AG04450 (cell line): ENCODE measurements at regions of chr5 and their contacts with region 1.

Region 1: GRCh38 chr5:135565725-135566421 is 12.9 kb downstream of the CXCL14 start:
- DNase-seq: no peak
- H3K4me3 ChIP-seq: no peak overlapping the region
- H3K27ac ChIP-seq: no peak overlapping the region
- H3K27me3 ChIP-seq: peaks cover 12% of the 10 kb centered on the region
- CTCF ChIP-seq: peak; percentile 95

Region 2: DNA sequence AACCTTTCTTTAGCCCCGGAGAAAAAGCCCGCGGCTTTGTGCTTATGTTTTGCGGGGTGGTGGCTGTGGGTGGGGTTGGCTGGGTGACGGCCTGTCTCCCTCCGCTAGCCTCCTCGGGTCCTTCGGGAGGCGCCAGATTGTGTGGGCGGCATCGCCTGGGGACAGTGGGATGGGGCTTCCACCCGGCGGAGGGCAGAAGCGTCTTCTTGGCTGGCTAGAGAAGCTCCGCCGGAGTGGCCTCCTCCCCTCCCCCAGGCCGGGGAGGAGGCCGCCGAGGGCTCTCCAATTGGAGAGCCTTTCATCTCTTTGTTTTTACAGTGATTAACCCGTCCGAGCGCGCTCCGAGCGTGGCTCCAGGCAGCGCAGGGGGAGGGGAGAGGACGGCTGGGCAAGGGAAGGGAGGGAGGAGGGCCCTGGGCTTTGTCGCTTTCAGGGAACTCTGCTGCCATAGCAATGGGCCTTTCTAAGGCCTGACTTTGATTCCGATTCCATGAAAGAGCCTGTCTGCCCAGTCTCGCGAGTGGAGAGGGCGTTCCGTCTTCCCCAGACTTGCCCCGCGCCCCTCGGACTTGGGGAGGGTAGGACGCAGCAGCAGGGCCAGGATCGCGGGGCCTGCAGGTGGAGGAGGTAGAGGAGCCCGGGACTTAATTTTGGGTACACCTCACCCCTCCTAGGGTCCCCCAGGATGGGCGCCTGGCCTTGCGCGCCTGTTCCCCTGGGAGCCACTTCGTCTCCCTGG is 77.0 kb before region 1 on chr5:
- CTCF ChIA-PET with region 1: interaction called, 11 read pairs
- POLR2A ChIA-PET with region 1: interaction called, 4 read pairs
- DNase-seq: peak; percentile 45
- H3K4me3 ChIP-seq: peak overlapping the region; percentile 61
- H3K27ac ChIP-seq: peak overlapping the region; percentile 11
- H3K27me3 ChIP-seq: peaks cover 18% of the 10 kb centered on the region
- CTCF ChIP-seq: no peak

Region 3: GRCh38 chr5:135543485-135544304 is 22.2 kb before region 1 on chr5:
- CTCF ChIA-PET with region 1: interaction called, 182 read pairs
- POLR2A ChIA-PET with region 1: no interaction called
- DNase-seq: no peak
- H3K4me3 ChIP-seq: peak overlapping the region; percentile 18
- H3K27ac ChIP-seq: no peak overlapping the region
- H3K27me3 ChIP-seq: peaks cover 92% of the 10 kb centered on the region
- CTCF ChIP-seq: no peak

Region 4: GRCh38 chr5:135578685-135579341 is 12.9 kb after region 1 on chr5 and contains the start of gene CXCL14:
- CTCF ChIA-PET with region 1: interaction called, 14 read pairs
- POLR2A ChIA-PET with region 1: no interaction called
- DNase-seq: no peak
- H3K4me3 ChIP-seq: peak within 1 kb of the TSS; percentile 34
- H3K27ac ChIP-seq: no peak within 1 kb of the TSS
- H3K27me3 ChIP-seq: peaks cover 46% of the 10 kb centered on the region
- CTCF ChIP-seq: no peak
- polyA plus RNA-seq, gene CXCL14: not detected in 2 replicates

Region 5: GRCh38 chr5:136182618-136183017 is 616.7 kb after region 1 on chr5:
- CTCF ChIA-PET with region 1: interaction called, 12 read pairs
- POLR2A ChIA-PET with region 1: no interaction called
- DNase-seq: no peak
- H3K4me3 ChIP-seq: no peak overlapping the region
- H3K27ac ChIP-seq: no peak overlapping the region
- H3K27me3 ChIP-seq: no peaks in the 10 kb centered on the region
- CTCF ChIP-seq: no peak